Left lung (tissue), 14 donors: ENCODE measurements at regions of chr6 and their contacts with region 1.

Region 1: DNA sequence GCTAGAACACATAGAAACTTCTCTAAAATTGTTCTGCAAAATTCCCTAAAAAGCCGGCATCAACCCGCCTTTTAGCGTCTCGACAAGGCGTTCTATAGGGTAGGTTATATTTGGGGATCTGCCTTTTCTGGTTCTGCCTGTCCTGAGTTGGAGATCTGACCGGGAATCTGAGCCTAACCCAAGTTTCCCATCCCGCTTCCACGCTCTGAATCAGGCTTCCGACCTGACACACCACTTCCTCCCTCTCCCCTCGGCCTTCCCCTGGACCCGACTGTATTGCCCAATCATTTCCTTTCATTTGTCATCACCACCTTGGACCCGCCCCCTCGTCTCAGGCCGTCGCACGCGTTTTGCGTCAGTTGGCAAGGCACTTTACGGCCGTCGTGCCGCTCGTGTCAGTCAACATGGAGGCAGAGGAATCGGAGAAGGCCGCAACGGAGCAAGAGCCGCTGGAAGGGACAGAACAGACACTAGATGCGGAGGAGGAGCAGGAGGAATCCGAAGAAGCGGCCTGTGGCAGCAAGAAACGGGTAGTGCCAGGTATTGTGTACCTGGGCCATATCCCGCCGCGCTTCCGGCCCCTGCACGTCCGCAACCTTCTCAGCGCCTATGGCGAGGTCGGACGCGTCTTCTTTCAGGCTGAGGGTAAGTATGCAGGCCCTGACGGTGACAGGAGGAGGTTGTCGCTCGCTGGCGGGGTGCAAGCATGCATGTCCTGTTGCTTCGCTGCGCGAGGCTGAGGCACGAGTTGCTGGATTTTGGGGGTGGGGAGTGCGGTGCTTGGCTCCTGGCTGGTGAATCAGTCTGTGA is at the start of gene ABT1:
- DNase-seq: peak; percentile 96 to 99 (median 98)
- ATAC-seq: peak; percentile 96
- H3K4me3 ChIP-seq: peak within 1 kb of the TSS; percentile 77 to 93
- H3K27ac ChIP-seq: peak within 1 kb of the TSS; percentile 79 to 89
- H3K4me1 ChIP-seq: peaks cover 5 to 30% of the 10 kb centered on the region in 2 donors
- H3K27me3 ChIP-seq: peaks cover 14 to 35% of the 10 kb centered on the region in 2 donors
- CTCF ChIP-seq: no peak
- polyA plus RNA-seq, gene ABT1: 14.1 to 16.9 (median 15.3) TPM

Region 2: DNA sequence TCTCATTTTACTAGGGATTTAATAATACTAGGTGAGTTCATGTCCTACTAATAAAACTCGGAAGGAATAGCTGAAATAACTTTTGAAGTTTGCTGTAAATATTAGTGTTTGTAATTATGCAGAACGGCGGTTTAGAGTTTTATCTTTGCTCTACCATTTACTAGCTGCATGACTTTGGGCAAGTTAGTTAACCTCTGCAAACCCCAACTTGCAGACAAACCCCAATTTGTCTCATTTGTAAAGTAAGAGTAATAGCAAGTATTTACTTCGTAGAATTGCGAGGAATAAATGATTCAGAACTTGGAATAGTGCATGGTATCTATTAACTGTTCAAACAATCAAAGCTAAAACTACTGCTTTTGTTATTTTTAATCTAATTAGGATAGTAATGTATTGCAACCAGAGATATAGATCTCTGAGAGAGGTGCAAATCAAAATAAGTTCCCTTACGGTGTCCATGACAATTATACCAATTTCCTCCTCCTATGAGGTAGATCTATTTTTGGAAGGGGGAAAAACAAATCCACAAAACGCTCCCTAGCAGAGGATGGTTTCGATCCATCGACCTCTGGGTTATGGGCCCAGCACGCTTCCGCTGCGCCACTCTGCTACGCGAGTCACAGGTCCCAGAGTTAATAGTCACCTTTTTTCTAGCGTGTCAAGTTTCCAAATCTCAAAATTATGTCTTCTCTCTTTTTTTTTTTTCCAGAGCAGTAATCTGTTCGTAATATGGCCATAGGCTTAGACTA is 266.8 kb before region 1 on chr6:
- intact Hi-C with region 1: loop called in 1 of 2 experiments (anchors 10 kb)
- DNase-seq: peak in 2 of 4 donors; percentile 34 to 55
- ATAC-seq: peak; percentile 41
- H3K4me3 ChIP-seq: no peak overlapping the region
- H3K27ac ChIP-seq: no peak overlapping the region
- H3K4me1 ChIP-seq: peaks cover 0 to 15% of the 10 kb centered on the region in 2 donors
- H3K27me3 ChIP-seq: peaks cover 76 to 100% of the 10 kb centered on the region in 2 donors
- CTCF ChIP-seq: no peak